ENCODE measurements at regions of chr20 and their contacts with region 1.

Region 1: DNA sequence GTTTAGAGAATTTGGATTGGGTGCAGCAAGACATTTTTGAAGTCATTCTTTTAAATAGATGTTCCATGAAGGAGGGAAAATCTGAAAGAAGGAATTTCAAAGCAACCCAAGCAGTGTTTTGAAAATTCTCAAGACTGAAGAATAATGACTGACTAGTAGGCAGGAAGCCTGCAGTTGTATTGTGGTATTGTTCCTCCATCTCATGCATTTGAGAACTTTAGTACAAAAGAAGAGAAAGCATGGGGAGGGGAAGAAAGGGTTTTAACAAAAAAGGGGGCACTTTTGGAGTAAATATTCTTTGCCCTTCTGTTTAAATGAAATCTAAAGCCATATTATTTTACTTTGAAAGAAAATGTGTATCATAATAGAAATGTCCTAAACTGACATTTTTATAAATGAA is 6.6 kb downstream of the NCOA3 start:
- DNase-seq: no peak
- H3K4me3 Mint-ChIP-seq: peak overlapping the region; percentile 39
- H3K27ac Mint-ChIP-seq: peak overlapping the region; percentile 84
- H3K4me1 Mint-ChIP-seq: peaks cover 77% of the 10 kb centered on the region
- H3K27me3 Mint-ChIP-seq: no peaks in the 10 kb centered on the region

Region 2: DNA sequence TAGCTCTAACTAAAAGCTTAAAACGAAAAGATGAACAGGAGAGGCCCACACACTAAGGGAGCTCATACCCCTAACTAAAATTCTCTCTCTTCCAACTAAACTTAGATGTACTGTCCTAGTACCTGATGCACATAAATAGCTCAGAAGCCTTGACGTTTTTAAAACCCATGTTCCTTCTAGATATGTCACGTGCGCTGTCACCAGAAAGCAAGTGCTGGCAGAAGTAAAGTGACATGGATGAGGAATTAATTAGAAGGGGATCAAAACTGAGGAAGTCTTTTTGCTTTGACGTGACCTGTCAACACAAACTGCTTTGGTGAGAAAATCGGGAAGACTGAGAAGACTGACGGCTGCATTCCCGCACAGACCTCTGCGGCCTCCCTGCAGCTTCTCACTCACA is 294.3 kb before region 1 on chr20:
- CTCF ChIA-PET with region 1: no interaction called
- intact Hi-C with region 1: no loop called
- DNase-seq: no peak
- H3K4me3 Mint-ChIP-seq: no peak overlapping the region
- H3K27ac Mint-ChIP-seq: no peak overlapping the region
- H3K4me1 Mint-ChIP-seq: no peaks in the 10 kb centered on the region
- H3K27me3 Mint-ChIP-seq: no peaks in the 10 kb centered on the region

Region 3: GRCh38 chr20:47540443-47541354 is 32.4 kb after region 1 on chr20:
- CTCF ChIA-PET with region 1: interaction called, 4 read pairs
- intact Hi-C with region 1: loop called (anchors 2 kb)
- DNase-seq: peak; percentile 38
- H3K4me3 Mint-ChIP-seq: no peak overlapping the region
- H3K27ac Mint-ChIP-seq: peak overlapping the region; percentile 50
- H3K4me1 Mint-ChIP-seq: peaks cover 77% of the 10 kb centered on the region
- H3K27me3 Mint-ChIP-seq: no peaks in the 10 kb centered on the region

Region 4: DNA sequence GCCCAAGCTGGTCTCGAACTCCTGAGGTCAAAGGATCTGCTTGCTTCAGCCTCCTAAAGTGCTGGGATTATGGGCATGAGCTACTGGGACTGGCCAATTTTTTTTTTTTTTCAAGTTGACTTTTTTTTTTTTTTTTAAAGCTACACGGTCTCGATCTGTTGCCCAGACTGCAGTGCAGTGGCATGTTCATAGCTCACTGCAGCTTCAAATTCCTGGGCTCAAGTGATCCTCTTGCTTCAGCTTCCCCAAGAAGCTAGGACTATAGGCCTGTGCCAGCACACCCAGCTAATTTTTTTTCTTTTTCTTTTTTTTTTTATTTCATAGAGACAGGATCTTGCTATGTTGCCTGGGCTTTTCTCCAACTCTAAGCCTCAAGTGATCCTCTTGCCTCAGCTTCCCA is 52.9 kb after region 1 on chr20:
- CTCF ChIA-PET with region 1: interaction called, 3 read pairs
- intact Hi-C with region 1: loop called (anchors 5 kb)
- DNase-seq: no peak
- H3K4me3 Mint-ChIP-seq: no peak overlapping the region
- H3K27ac Mint-ChIP-seq: peak overlapping the region; percentile 37
- H3K4me1 Mint-ChIP-seq: peaks cover 76% of the 10 kb centered on the region
- H3K27me3 Mint-ChIP-seq: no peaks in the 10 kb centered on the region

Region 5: GRCh38 chr20:47905612-47906347 is 397.5 kb after region 1 on chr20:
- CTCF ChIA-PET with region 1: no interaction called
- intact Hi-C with region 1: no loop called
- DNase-seq: no peak
- H3K4me3 Mint-ChIP-seq: no peak overlapping the region
- H3K27ac Mint-ChIP-seq: no peak overlapping the region
- H3K4me1 Mint-ChIP-seq: no peaks in the 10 kb centered on the region
- H3K27me3 Mint-ChIP-seq: no peaks in the 10 kb centered on the region